Naive thymus-derived CD4-positive, alpha-beta T cell (primary cell): ENCODE measurements at regions of chr5 and their contacts with region 1.

Region 1: DNA sequence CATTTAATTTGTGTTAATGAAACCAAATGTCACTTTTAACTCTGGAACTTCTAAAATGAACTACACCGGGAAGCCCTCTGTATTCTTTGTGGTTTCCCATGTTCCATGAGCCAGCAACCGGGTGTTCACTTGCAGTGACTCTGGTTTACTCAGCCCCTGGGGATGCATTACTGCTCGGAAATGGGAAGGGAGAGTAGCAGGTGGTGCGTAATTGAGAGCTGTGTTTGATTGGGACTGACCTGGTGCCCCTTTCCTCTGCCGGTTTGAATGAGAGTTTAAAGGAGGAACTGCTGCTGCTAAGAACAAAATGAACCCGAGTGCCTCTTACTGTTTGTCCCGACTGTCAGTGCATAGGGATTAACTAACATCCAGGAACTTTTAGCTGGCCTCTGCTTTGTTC is 100.1 kb upstream of the DHFR start:
- DNase-seq: peak in 2 of 9 donors; percentile 11 to 49
- ATAC-seq: no peak
- H3K4me3 ChIP-seq: peak overlapping the region; percentile 7
- H3K4me3 Mint-ChIP-seq: peak overlapping the region; percentile 49 to 87 (median 78)
- H3K27ac ChIP-seq: peak overlapping the region; percentile 57
- H3K27ac Mint-ChIP-seq: peak overlapping the region; percentile 45 to 93 (median 79)
- H3K4me1 ChIP-seq: peaks cover 20 to 28% of the 10 kb centered on the region in 2 donors
- H3K4me1 Mint-ChIP-seq: peaks cover 30 to 61% (median 47%) of the 10 kb centered on the region in 7 donors
- H3K27me3 ChIP-seq: no peaks in the 10 kb centered on the region
- H3K27me3 Mint-ChIP-seq: no peaks in the 10 kb centered on the region

Region 2: GRCh38 chr5:78984439-78985115 is 1770.3 kb before region 1 on chr5:
- CTCF ChIA-PET with region 1: no interaction called
- POLR2A ChIA-PET with region 1: no interaction called
- intact Hi-C with region 1: no loop called
- DNase-seq: peak; percentile 62 to 87 (median 67)
- ATAC-seq: peak; percentile 81
- H3K4me3 ChIP-seq: peak overlapping the region; percentile 79
- H3K4me3 Mint-ChIP-seq: peak overlapping the region; percentile 87 to 98 (median 92)
- H3K27ac ChIP-seq: peak overlapping the region; percentile 76
- H3K27ac Mint-ChIP-seq: peak overlapping the region; percentile 75 to 98 (median 91)
- H3K4me1 ChIP-seq: peaks cover 5 to 13% of the 10 kb centered on the region in 2 donors
- H3K4me1 Mint-ChIP-seq: peaks cover 15 to 30% (median 26%) of the 10 kb centered on the region in 7 donors
- H3K27me3 ChIP-seq: no peaks in the 10 kb centered on the region
- H3K27me3 Mint-ChIP-seq: no peaks in the 10 kb centered on the region

Region 3: GRCh38 chr5:80711938-80712337 is 43.0 kb before region 1 on chr5:
- CTCF ChIA-PET with region 1: no interaction called
- POLR2A ChIA-PET with region 1: no interaction called
- intact Hi-C with region 1: loop called in 1 of 2 experiments (anchors 5 kb)
- DNase-seq: no peak
- ATAC-seq: no peak
- H3K4me3 ChIP-seq: no peak overlapping the region
- H3K4me3 Mint-ChIP-seq: no peak overlapping the region
- H3K27ac ChIP-seq: no peak overlapping the region
- H3K27ac Mint-ChIP-seq: peak overlapping the region in 1 of 9 donors; percentile 72
- H3K4me1 ChIP-seq: no peaks in the 10 kb centered on the region
- H3K4me1 Mint-ChIP-seq: peaks cover 0 to 42% (median 4%) of the 10 kb centered on the region in 7 donors
- H3K27me3 ChIP-seq: no peaks in the 10 kb centered on the region
- H3K27me3 Mint-ChIP-seq: no peaks in the 10 kb centered on the region

Region 4: DNA sequence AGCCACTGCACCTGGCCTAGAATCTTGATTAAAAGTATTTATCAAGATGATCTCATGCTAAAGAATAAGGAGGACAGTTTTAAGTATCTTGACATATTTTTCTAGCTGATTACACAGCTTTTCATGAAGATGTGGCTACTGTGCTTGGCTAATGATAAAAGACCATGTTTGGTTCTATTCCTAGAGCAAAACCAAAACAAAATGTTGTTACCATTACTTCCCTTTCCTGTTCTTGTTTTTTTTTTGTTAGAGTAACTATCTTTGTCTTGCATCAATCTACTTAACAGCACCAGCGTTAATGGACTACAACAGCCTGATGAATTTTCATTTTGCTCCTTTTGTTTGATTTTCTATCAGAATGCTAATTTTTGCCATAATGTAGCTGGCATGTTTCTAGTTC is 13.9 kb before region 1 on chr5:
- CTCF ChIA-PET with region 1: no interaction called
- POLR2A ChIA-PET with region 1: no interaction called
- intact Hi-C with region 1: loop called in 1 of 2 experiments (anchors 2 kb)
- DNase-seq: no peak
- ATAC-seq: no peak
- H3K4me3 ChIP-seq: no peak overlapping the region
- H3K4me3 Mint-ChIP-seq: peak overlapping the region in 1 of 10 donors; percentile 54
- H3K27ac ChIP-seq: no peak overlapping the region
- H3K27ac Mint-ChIP-seq: peak overlapping the region in 3 of 9 donors; percentile 30 to 80 (median 38)
- H3K4me1 ChIP-seq: peaks cover 0 to 17% of the 10 kb centered on the region in 2 donors
- H3K4me1 Mint-ChIP-seq: peaks cover 0 to 39% (median 5%) of the 10 kb centered on the region in 7 donors
- H3K27me3 ChIP-seq: no peaks in the 10 kb centered on the region
- H3K27me3 Mint-ChIP-seq: no peaks in the 10 kb centered on the region